ENCODE measurements at regions of chr2 and their contacts with region 1.

Region 1: DNA sequence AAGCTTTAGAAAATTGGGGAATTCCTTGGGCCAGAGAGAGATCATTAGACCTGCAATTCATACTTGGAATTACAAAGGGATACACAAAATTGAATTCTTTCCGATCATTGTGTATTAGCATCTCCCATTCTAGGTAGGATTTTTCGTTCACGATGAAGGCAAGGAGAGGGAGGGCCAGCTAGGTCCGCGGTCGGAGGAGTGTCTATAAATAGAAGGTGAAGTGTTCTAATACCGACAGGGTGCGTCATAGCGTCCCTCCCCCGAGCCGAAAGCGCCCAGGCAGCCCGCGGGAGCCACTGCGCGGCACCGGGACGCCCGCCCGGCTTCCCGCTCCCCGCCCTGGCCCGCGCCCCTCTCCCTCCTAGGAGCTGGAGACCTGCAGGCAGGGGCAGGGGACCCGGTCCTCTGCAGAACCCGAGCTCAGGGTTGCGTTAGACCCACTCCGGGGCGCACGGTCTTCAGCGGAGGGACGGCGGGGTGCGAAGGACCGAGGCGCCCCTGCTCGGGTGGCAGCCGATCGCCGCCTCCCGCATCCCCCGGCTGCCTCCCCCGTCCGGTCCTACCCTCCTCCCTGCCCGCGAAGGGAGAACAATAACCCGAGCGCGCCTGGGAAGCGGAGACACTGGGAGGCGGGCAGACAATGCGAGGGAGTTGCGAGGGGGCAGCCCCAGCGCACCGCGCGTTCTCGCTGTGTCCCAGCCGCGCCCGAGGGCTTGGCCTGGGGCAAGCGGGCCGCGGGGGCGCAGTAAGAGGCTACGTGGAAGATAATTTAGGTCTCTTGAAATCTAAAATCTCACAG is 114.2 kb upstream of the SERTAD2 start:
- DNase-seq: no peak
- ATAC-seq: peak; percentile 82
- H3K4me3 ChIP-seq: peak overlapping the region; percentile 49 to 54
- H3K27ac ChIP-seq: peak overlapping the region; percentile 98
- H3K4me1 ChIP-seq: peaks cover 32 to 51% of the 10 kb centered on the region in 2 experiments
- H3K27me3 ChIP-seq: no peaks in the 10 kb centered on the region
- CTCF ChIP-seq: no peak
- POLR2A ChIP-seq: peak; percentile 43
- RAD21 ChIP-seq: peak; percentile 39

Region 2: GRCh38 chr2:64685438-64685837 is 82.4 kb before region 1 on chr2:
- CTCF ChIA-PET with region 1: no interaction called
- POLR2A ChIA-PET with region 1: no interaction called
- RAD21 ChIA-PET with region 1: no interaction called
- intact Hi-C with region 1: no loop called
- DNase-seq: no peak
- ATAC-seq: no peak
- H3K4me3 ChIP-seq: no peak overlapping the region
- H3K27ac ChIP-seq: no peak overlapping the region
- H3K4me1 ChIP-seq: peaks cover 0 to 6% of the 10 kb centered on the region in 2 experiments; a peak in 2 of 4 replicates
- H3K27me3 ChIP-seq: no peaks in the 10 kb centered on the region
- CTCF ChIP-seq: no peak
- POLR2A ChIP-seq: no peak
- RAD21 ChIP-seq: no peak

Region 3: DNA sequence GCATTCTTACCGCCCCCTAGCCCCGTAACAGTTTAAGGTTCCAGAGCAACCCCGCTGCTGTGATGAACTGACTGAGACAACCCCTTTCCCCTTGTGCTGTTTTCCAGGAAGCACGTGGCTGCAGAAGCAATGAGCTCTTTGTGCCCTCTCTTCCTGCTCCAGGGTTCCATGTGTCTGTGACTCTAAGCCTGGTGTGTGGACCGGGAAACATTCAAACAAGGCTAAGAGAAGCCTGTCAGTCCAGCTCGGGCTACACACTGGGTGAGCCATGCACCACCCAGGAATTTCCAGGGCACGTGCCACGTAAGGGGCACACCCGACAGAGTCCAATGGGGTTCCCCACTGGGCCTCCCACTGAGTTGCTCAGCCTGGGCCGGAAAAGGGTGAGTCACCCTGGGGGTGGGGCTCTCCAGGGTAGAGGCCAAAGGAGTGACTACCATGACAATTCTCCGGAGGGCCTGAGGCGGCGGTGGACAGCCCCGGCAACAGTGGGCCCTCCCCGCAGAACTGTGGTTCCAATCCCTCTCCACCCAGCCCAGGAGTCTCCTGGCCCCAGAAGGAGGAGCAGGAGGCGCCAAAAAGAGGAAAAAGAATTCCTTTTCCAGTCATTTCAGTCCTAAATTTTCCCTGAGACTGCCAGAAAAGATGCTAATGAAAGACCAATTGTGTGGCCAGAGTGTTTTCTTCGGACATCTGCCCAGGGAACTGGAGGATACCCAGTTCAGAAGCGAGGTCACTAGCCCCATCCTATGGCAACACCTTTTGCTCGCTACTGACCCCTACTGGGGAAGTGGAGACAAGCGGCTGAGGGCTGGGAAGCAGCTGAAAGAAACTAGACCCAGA is 63.5 kb after region 1 on chr2:
- CTCF ChIA-PET with region 1: no interaction called
- POLR2A ChIA-PET with region 1: interaction called, 5 read pairs
- RAD21 ChIA-PET with region 1: no interaction called
- intact Hi-C with region 1: loop called (anchors 5 kb)
- DNase-seq: peak; percentile 98
- ATAC-seq: peak; percentile 89
- H3K4me3 ChIP-seq: peak overlapping the region; percentile 21 to 44; a peak in 3 of 4 replicates
- H3K27ac ChIP-seq: peak overlapping the region; percentile 80
- H3K4me1 ChIP-seq: peaks cover 52 to 71% of the 10 kb centered on the region in 2 experiments
- H3K27me3 ChIP-seq: no peaks in the 10 kb centered on the region
- CTCF ChIP-seq: peak in 2 of 3 experiments; percentile 98 to 99; a peak in 4 of 6 replicates
- POLR2A ChIP-seq: peak; percentile 40
- RAD21 ChIP-seq: no peak

Measured in HCT116 (cell line).